Activated CD4-positive, alpha-beta T cell treated with anti-CD3 and anti-CD28 coated beads for 36 hours (primary cell): ENCODE measurements at regions of chr19 and their contacts with region 1.

Region 1: GRCh38 chr19:24054549-24054935 is 32.4 kb upstream of the ZNF254 start:
- DNase-seq: peak; percentile 25
- ATAC-seq: peak; percentile 86
- H3K4me3 Mint-ChIP-seq: no peak overlapping the region
- H3K27ac Mint-ChIP-seq: peak overlapping the region; percentile 81
- H3K4me1 Mint-ChIP-seq: peaks cover 25% of the 10 kb centered on the region
- H3K27me3 Mint-ChIP-seq: no peaks in the 10 kb centered on the region

Region 2: DNA sequence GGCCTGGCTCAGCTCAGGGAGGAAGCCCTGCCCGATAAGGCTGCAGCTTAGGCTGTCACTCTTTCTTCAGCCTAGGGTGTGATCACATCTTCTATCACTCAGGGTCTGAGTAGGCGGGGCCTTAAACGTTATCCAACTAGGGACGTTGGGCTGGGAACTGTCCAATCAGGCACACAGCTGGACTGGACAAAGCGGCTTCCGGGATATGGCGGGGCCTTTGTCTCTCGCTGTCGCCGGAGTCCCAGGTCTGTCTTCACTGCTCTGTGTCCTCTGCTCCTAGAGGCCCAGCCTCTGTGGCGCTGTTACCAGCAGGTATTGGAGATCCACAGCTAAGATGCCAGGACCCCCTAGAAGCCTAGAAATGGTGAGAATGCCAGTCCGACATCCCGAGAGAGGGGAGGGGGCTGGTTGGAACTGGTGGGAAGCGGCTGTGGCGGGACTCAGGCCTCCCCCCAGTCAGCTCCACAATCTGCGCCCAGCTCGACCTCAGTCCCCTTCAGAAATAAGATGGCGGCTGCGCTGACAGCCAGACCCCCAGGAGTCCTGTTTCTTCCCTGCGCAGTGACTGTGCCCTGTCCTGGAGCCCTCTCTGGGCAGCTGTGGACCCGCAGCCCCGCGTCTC is 32.5 kb after region 1 on chr19 and contains the start of gene ZNF254:
- CTCF ChIA-PET with region 1: no interaction called
- POLR2A ChIA-PET with region 1: no interaction called
- intact Hi-C with region 1: loop called in 1 of 2 experiments (anchors 2 kb)
- DNase-seq: peak; percentile 93
- ATAC-seq: peak; percentile 100
- H3K4me3 Mint-ChIP-seq: peak within 1 kb of the TSS; percentile 94
- H3K27ac Mint-ChIP-seq: peak within 1 kb of the TSS; percentile 97
- H3K4me1 Mint-ChIP-seq: peaks cover 6% of the 10 kb centered on the region
- H3K27me3 Mint-ChIP-seq: no peaks in the 10 kb centered on the region
- total RNA-seq, gene ZNF254: 8.8 to 9.6 TPM

Region 3: DNA sequence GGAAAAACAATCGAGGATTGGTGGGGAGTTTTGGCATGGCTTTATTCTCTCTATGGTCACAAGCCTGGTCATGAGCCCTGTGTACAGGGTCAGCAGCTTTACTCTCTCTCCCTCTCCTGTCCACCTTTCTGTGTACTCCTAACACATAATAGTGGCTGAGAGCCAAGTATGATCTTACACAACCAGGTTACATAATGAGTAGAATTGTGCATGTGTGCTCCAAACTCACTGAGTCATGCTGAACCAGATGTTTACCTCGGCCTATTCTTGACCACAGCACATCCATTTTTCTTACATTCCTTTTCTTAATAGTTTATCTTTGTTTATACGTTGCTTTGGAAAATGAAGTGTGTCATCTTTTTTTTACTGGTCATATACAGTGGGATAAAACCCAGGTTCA is 85.6 kb after region 1 on chr19:
- CTCF ChIA-PET with region 1: no interaction called
- POLR2A ChIA-PET with region 1: no interaction called
- intact Hi-C with region 1: no loop called
- DNase-seq: no peak
- ATAC-seq: no peak
- H3K4me3 Mint-ChIP-seq: no peak overlapping the region
- H3K27ac Mint-ChIP-seq: no peak overlapping the region
- H3K4me1 Mint-ChIP-seq: no peaks in the 10 kb centered on the region
- H3K27me3 Mint-ChIP-seq: no peaks in the 10 kb centered on the region